ENCODE measurements at regions of chr17 and their contacts with region 1.

Region 1: GRCh38 chr17:44170499-44171201 is at the start of gene ASB16:
- DNase-seq: no peak
- H3K4me3 ChIP-seq: no peak within 1 kb of the TSS
- H3K27ac ChIP-seq: no peak within 1 kb of the TSS
- H3K4me1 ChIP-seq: no peaks in the 10 kb centered on the region
- H3K27me3 ChIP-seq: no peaks in the 10 kb centered on the region
- CTCF ChIP-seq: no peak
- POLR2A ChIP-seq: no peak
- total RNA-seq, gene ASB16: not detected in 2 replicates

Region 2: DNA sequence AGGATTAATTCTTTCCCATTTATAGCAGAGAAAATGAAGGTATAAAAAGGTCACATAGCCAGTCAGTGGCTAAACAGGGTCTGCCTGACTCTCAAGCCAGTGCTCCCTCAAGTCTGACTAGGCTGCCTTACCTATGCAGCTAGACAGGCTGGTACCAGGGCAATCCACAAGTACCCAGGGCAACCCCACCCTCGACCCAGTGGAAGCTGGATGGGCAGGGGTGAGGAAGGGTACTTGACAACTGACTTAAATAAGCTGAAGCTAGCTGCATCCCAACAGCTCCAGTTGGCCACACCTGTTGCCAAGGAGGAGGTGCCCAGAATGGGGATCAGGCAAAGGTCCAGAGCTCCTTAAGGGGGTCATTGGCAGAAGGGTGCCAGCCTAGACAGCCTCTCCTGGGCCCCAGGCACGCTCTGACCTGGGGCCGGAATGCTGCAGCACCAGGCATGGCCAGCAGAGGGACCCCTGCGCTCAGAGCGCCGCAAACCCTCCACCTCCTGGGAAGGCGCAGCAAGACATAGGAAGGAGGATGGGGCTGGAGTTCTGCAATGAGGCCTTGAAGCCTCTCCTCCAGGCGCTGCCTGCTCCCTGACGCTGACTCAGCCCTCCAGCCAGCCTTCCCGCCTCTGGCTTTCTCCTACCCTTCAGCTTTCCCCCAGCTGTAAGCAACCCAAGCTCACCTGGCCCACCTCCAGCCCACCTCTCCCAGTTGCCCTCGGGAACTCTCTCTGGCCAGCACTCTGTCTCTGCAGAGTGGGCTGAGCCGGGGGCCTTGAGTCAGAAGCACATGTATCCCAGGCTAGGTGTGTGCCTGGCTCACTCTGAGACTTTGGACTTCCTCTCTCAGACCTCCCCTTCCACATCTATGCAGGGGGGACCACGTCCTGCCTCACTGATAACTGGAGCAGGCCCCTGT is 292.1 kb before region 1 on chr17:
- CTCF ChIA-PET with region 1: interaction called, 10 read pairs
- POLR2A ChIA-PET with region 1: no interaction called
- dilution Hi-C with region 1: no loop called
- intact Hi-C with region 1: no loop called
- DNase-seq: peak; percentile 71
- H3K4me3 ChIP-seq: no peak overlapping the region
- H3K27ac ChIP-seq: no peak overlapping the region
- H3K4me1 ChIP-seq: no peaks in the 10 kb centered on the region
- H3K27me3 ChIP-seq: peaks cover 3 to 4% of the 10 kb centered on the region in 2 experiments
- CTCF ChIP-seq: peak; percentile 93 to 100
- POLR2A ChIP-seq: no peak

Region 3: DNA sequence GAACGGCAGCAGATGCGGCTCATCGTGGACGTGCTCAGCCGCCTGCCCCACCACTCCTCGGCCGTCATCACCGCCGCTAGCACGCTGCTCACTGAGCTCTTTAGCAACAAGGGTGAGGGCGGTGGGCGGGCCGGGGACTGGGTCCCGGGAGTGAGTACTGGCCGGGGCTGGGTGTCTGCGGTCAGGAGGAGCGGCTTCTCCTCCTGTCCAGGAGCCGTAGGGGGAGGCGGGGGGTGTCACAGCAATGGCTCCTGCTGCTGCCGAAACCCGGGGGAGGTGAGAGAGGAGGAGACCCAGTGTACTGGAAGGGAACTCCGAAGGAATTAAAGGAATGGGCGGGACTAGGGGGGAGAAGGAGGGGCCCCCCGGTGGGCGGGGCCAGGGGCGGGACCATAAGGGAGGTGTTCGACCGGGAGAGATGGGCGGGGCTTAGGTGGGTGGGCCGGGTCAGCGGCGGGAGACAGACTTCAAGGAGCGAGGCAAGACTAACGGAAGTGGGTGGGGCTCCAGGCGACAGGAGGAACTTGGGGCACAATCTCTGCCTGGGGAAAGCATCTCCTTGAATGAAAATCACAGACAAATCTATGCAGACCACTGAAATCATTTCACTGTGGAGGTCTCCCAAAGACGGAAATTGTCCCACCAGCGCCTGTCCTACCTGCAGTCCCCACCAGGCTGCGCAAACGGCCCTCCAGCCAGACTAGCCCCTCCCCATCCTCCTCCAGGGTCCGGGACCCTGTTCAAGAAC is 163.9 kb before region 1 on chr17:
- CTCF ChIA-PET with region 1: interaction called, 7 read pairs
- POLR2A ChIA-PET with region 1: no interaction called
- dilution Hi-C with region 1: no loop called
- intact Hi-C with region 1: loop called (anchors 1 kb)
- DNase-seq: peak; percentile 93
- H3K4me3 ChIP-seq: peak overlapping the region in 2 of 3 experiments; percentile 43 to 56
- H3K27ac ChIP-seq: no peak overlapping the region
- H3K4me1 ChIP-seq: peaks cover 36% of the 10 kb centered on the region
- H3K27me3 ChIP-seq: no peaks in the 10 kb centered on the region
- CTCF ChIP-seq: peak; percentile 57 to 76
- POLR2A ChIP-seq: no peak

Region 4: GRCh38 chr17:44110823-44111633 is 59.6 kb before region 1 on chr17:
- CTCF ChIA-PET with region 1: interaction called, 18 read pairs
- POLR2A ChIA-PET with region 1: no interaction called
- dilution Hi-C with region 1: no loop called
- intact Hi-C with region 1: no loop called
- DNase-seq: peak; percentile 87
- H3K4me3 ChIP-seq: peak overlapping the region in 2 of 3 experiments; percentile 10 to 40
- H3K27ac ChIP-seq: no peak overlapping the region
- H3K4me1 ChIP-seq: peaks cover 14% of the 10 kb centered on the region
- H3K27me3 ChIP-seq: no peaks in the 10 kb centered on the region
- CTCF ChIP-seq: no peak
- POLR2A ChIP-seq: no peak

Region 5: GRCh38 chr17:44149750-44150329 is 20.8 kb before region 1 on chr17:
- CTCF ChIA-PET with region 1: interaction called, 23 read pairs
- POLR2A ChIA-PET with region 1: interaction called, 3 read pairs
- dilution Hi-C with region 1: no loop called
- intact Hi-C with region 1: no loop called
- DNase-seq: no peak
- H3K4me3 ChIP-seq: no peak overlapping the region
- H3K27ac ChIP-seq: no peak overlapping the region
- H3K4me1 ChIP-seq: no peaks in the 10 kb centered on the region
- H3K27me3 ChIP-seq: no peaks in the 10 kb centered on the region
- CTCF ChIP-seq: no peak
- POLR2A ChIP-seq: no peak

Region 6: GRCh38 chr17:44331249-44331760 is 160.7 kb after region 1 on chr17:
- CTCF ChIA-PET with region 1: interaction called, 6 read pairs
- POLR2A ChIA-PET with region 1: no interaction called
- dilution Hi-C with region 1: no loop called
- intact Hi-C with region 1: loop called (anchors 1 kb)
- DNase-seq: peak; percentile 80
- H3K4me3 ChIP-seq: no peak overlapping the region
- H3K27ac ChIP-seq: no peak overlapping the region
- H3K4me1 ChIP-seq: no peaks in the 10 kb centered on the region
- H3K27me3 ChIP-seq: no peaks in the 10 kb centered on the region
- CTCF ChIP-seq: peak; percentile 68 to 72
- POLR2A ChIP-seq: no peak

Region 7: DNA sequence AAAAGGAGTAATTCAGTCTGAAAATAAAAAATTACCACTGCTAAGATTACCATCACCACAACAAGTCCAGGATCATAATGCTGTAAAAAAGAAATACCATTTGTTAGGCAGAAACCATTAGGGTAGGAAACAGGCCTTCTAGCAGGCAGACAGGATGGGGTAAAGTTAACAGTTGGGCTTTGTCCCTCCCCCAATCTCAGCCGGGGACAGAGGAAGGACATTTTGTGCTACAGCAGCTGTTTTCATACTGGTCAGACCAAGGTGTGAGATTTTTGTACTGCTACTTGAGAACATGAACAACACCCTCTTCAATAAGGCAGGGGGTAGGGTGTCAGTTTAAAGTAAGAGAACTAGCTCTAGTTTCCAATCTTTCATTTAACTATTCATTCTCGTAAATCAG is 268.0 kb after region 1 on chr17:
- CTCF ChIA-PET with region 1: no interaction called
- POLR2A ChIA-PET with region 1: no interaction called
- dilution Hi-C with region 1: no loop called
- intact Hi-C with region 1: no loop called
- DNase-seq: no peak
- H3K4me3 ChIP-seq: no peak overlapping the region
- H3K27ac ChIP-seq: no peak overlapping the region
- H3K4me1 ChIP-seq: peaks cover 2% of the 10 kb centered on the region
- H3K27me3 ChIP-seq: no peaks in the 10 kb centered on the region
- CTCF ChIP-seq: no peak
- POLR2A ChIP-seq: no peak